Activated B cell treated with CpG ODN at 0.5 μM for 24 hours (primary cell): ENCODE measurements at regions of chr6 and their contacts with region 1.

Region 1: GRCh38 chr6:13328076-13328874 is at the start of gene TBC1D7:
- DNase-seq: peak; percentile 95
- ATAC-seq: peak; percentile 85
- H3K4me3 Mint-ChIP-seq: peak within 1 kb of the TSS; percentile 95
- H3K27ac Mint-ChIP-seq: peak within 1 kb of the TSS; percentile 98
- H3K4me1 Mint-ChIP-seq: peaks cover 36% of the 10 kb centered on the region
- H3K27me3 Mint-ChIP-seq: no peaks in the 10 kb centered on the region
- CTCF ChIP-seq: no peak
- total RNA-seq, gene TBC1D7: 17.3 and 18.5 TPM in 2 replicates

Region 2: DNA sequence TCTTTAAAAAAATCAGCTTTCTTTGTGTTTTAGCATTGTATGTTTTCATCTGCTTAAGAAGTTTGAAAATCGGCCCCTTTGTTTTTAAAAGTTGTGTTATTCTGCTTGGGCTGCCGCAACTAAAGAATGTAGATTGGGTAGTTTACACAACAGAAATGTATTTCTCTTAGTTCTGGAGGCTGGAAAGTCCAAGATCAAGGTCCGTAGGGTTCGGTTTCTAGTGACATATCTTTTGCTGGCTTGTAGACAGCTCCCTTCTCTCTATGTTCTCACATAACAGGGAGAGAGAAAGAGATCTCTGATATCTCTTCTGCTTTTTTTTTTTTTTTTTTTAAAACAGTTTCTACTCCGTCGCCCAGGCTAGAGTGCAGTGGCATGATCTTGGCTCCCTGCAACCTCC is 138.6 kb before region 1 on chr6:
- CTCF ChIA-PET with region 1: interaction called, 118 read pairs
- POLR2A ChIA-PET with region 1: interaction called, 12 read pairs
- intact Hi-C with region 1: no loop called
- DNase-seq: no peak
- ATAC-seq: no peak
- H3K4me3 Mint-ChIP-seq: no peak overlapping the region
- H3K27ac Mint-ChIP-seq: no peak overlapping the region
- H3K4me1 Mint-ChIP-seq: peaks cover 5% of the 10 kb centered on the region
- H3K27me3 Mint-ChIP-seq: peaks cover 7% of the 10 kb centered on the region
- CTCF ChIP-seq: no peak

Region 3: GRCh38 chr6:13261464-13261994 is 66.7 kb before region 1 on chr6:
- CTCF ChIA-PET with region 1: no interaction called
- POLR2A ChIA-PET with region 1: interaction called, 27 read pairs
- intact Hi-C with region 1: loop called (anchors 1 kb)
- DNase-seq: peak; percentile 57
- ATAC-seq: peak; percentile 74
- H3K4me3 Mint-ChIP-seq: peak overlapping the region; percentile 74
- H3K27ac Mint-ChIP-seq: peak overlapping the region; percentile 75
- H3K4me1 Mint-ChIP-seq: peaks cover 92% of the 10 kb centered on the region
- H3K27me3 Mint-ChIP-seq: no peaks in the 10 kb centered on the region
- CTCF ChIP-seq: no peak

Region 4: GRCh38 chr6:13286181-13286580 is 42.1 kb before region 1 on chr6:
- CTCF ChIA-PET with region 1: interaction called, 3 read pairs
- POLR2A ChIA-PET with region 1: interaction called, 15 read pairs
- intact Hi-C with region 1: no loop called
- DNase-seq: no peak
- ATAC-seq: peak; percentile 71
- H3K4me3 Mint-ChIP-seq: peak overlapping the region; percentile 39
- H3K27ac Mint-ChIP-seq: peak overlapping the region; percentile 59
- H3K4me1 Mint-ChIP-seq: peaks cover 67% of the 10 kb centered on the region
- H3K27me3 Mint-ChIP-seq: no peaks in the 10 kb centered on the region
- CTCF ChIP-seq: no peak

Region 5: GRCh38 chr6:13355043-13355951 is 27.0 kb after region 1 on chr6:
- CTCF ChIA-PET with region 1: no interaction called
- POLR2A ChIA-PET with region 1: interaction called, 15 read pairs
- intact Hi-C with region 1: no loop called
- DNase-seq: no peak
- ATAC-seq: peak; percentile 46
- H3K4me3 Mint-ChIP-seq: peak overlapping the region; percentile 70
- H3K27ac Mint-ChIP-seq: peak overlapping the region; percentile 92
- H3K4me1 Mint-ChIP-seq: peaks cover 70% of the 10 kb centered on the region
- H3K27me3 Mint-ChIP-seq: no peaks in the 10 kb centered on the region
- CTCF ChIP-seq: no peak

Region 6: DNA sequence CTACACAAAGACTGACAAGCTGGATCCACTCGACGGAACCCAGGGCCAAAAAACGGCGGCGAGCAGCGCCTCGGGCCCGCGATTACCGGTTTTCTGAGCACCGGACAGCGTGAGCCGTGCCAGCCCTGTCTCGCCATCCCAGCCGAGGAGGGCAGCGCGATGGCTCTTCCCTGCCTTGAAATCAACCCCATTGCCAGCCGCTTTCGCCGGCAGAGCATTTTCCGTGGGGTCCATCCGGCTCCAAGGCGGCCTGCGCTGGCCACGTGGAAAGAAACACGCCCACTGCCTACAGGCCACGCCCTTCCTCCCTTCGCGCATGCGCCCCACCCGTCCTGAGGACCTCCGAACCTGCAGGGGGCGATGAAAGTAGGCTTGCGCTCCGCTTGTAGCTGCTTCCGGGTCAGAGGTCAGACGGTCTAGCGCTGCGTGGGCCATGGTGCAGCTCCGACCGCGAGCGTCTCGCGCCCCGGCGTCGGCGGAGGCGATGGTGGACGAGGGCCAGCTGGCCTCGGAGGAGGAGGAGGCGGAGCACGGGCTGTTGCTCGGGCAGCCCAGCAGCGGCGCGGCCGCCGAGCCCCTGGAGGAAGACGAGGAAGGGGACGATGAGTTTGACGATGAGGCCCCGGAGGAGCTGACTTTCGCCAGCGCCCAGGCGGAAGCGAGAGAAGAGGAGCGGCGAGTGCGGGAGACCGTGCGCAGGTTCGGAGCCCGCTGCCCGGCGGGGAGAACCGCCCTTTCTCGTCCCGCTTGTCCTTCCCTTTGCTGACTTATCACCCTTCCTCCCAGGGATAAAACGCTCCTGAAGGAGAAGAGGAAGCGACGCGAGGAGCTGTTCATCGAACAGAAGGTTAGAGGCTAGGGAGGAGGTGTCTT is 286.9 kb after region 1 on chr6 and contains the start of gene NOL7:
- CTCF ChIA-PET with region 1: interaction called, 3 read pairs
- POLR2A ChIA-PET with region 1: interaction called, 16 read pairs
- intact Hi-C with region 1: loop called (anchors 1 kb)
- DNase-seq: peak; percentile 98
- ATAC-seq: peak; percentile 91
- H3K4me3 Mint-ChIP-seq: peak within 1 kb of the TSS; percentile 98
- H3K27ac Mint-ChIP-seq: peak within 1 kb of the TSS; percentile 94
- H3K4me1 Mint-ChIP-seq: peaks cover 43% of the 10 kb centered on the region
- H3K27me3 Mint-ChIP-seq: no peaks in the 10 kb centered on the region
- CTCF ChIP-seq: peak; percentile 30
- total RNA-seq, gene NOL7: 67.5 and 74.4 TPM in 2 replicates

Region 7: GRCh38 chr6:14743465-14744211 is 1415.4 kb after region 1 on chr6:
- CTCF ChIA-PET with region 1: no interaction called
- POLR2A ChIA-PET with region 1: no interaction called
- intact Hi-C with region 1: no loop called
- DNase-seq: no peak
- ATAC-seq: peak; percentile 62
- H3K4me3 Mint-ChIP-seq: no peak overlapping the region
- H3K27ac Mint-ChIP-seq: peak overlapping the region; percentile 20
- H3K4me1 Mint-ChIP-seq: peaks cover 27% of the 10 kb centered on the region
- H3K27me3 Mint-ChIP-seq: peaks cover 2% of the 10 kb centered on the region
- CTCF ChIP-seq: no peak